Dendritic cell treated with granulocyte-macrophage colony-stimulating factor and Interleukin-4, amounts not matched to agents 40 ng/mL and 50 ng/mL, for 4 days (primary cell): ENCODE measurements at regions of chr5 and their contacts with region 1.

Region 1: DNA sequence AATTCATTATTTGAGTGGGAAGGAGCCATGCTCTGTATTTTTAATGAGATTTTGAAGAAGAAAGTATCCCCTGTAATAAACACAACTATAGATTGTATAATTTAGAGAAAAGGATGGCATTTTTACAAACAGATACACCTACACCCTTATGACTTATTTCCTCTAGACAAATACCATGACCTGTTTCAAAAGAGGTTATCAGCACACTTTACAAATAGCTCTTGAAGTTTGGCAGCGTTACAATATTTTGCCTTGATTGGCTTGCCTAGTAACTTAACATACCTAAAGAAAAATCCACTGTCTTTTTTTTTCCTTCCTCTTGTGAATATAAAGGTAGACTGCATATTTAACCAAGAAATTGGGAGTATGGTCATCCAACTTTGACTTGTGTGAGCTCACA is 28.5 kb upstream of the CETN3 start:
- H3K4me3 Mint-ChIP-seq: no peak overlapping the region
- H3K27ac Mint-ChIP-seq: no peak overlapping the region
- H3K4me1 Mint-ChIP-seq: peaks cover 5% of the 10 kb centered on the region
- H3K27me3 Mint-ChIP-seq: no peaks in the 10 kb centered on the region

Region 2: GRCh38 chr5:90606539-90606938 is 168.4 kb after region 1 on chr5:
- intact Hi-C with region 1: loop called (anchors 2 kb)
- H3K4me3 Mint-ChIP-seq: no peak overlapping the region
- H3K27ac Mint-ChIP-seq: no peak overlapping the region
- H3K4me1 Mint-ChIP-seq: peaks cover 5% of the 10 kb centered on the region
- H3K27me3 Mint-ChIP-seq: peaks cover 3% of the 10 kb centered on the region